ENCODE measurements at regions of chr2 and their contacts with region 1.

Region 1: GRCh38 chr2:239288951-239289511 is 111.8 kb downstream of the HDAC4 start:
- DNase-seq: peak; percentile 69
- ATAC-seq: peak; percentile 73
- H3K4me3 Mint-ChIP-seq: peak overlapping the region; percentile 77
- H3K27ac Mint-ChIP-seq: peak overlapping the region; percentile 93
- H3K4me1 Mint-ChIP-seq: peaks cover 76% of the 10 kb centered on the region
- H3K27me3 Mint-ChIP-seq: no peaks in the 10 kb centered on the region

Region 2: DNA sequence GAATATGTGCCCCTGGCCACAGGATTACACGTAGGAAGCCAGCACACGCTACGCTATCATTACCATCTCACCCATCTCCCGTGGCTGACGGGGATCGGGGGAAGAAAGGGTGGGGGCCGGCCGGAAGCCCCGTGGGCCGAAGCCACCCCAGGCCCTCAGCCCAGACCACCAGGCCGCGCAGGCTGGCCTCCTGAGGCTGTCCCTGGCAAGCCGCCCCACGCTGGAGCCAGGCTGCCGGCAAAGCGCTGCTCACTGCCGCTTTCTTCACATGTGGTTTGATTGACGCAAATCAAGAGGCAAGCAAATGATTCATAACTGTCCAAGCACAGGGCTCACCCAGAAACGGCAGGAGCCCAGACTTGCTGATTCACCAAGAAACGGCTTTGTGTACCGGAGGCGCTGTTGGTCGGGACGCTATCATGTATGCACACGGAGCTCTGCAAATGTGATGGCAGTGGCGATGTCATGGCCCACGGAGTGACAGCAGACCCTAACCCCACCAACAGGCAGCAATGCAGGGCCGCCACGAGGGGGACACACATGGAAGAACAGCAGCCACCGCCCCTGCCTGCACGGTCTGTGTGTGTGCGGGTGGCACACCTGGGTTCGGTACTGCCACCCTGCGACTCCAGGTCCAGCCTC is 13.9 kb before region 1 on chr2:
- CTCF ChIA-PET with region 1: interaction called, 23 read pairs
- POLR2A ChIA-PET with region 1: interaction called, 19 read pairs
- DNase-seq: peak; percentile 83
- ATAC-seq: peak; percentile 95
- H3K4me3 Mint-ChIP-seq: peak overlapping the region; percentile 60
- H3K27ac Mint-ChIP-seq: peak overlapping the region; percentile 89
- H3K4me1 Mint-ChIP-seq: peaks cover 78% of the 10 kb centered on the region
- H3K27me3 Mint-ChIP-seq: no peaks in the 10 kb centered on the region

Region 3: GRCh38 chr2:239303711-239304532 is 14.9 kb after region 1 on chr2:
- CTCF ChIA-PET with region 1: interaction called, 10 read pairs
- POLR2A ChIA-PET with region 1: interaction called, 4 read pairs
- DNase-seq: no peak
- ATAC-seq: peak; percentile 40
- H3K4me3 Mint-ChIP-seq: no peak overlapping the region
- H3K27ac Mint-ChIP-seq: peak overlapping the region; percentile 66
- H3K4me1 Mint-ChIP-seq: peaks cover 38% of the 10 kb centered on the region
- H3K27me3 Mint-ChIP-seq: no peaks in the 10 kb centered on the region

Region 4: GRCh38 chr2:239376351-239376750 is 87.3 kb after region 1 on chr2:
- CTCF ChIA-PET with region 1: no interaction called
- POLR2A ChIA-PET with region 1: no interaction called
- DNase-seq: no peak
- ATAC-seq: no peak
- H3K4me3 Mint-ChIP-seq: no peak overlapping the region
- H3K27ac Mint-ChIP-seq: no peak overlapping the region
- H3K4me1 Mint-ChIP-seq: peaks cover 13% of the 10 kb centered on the region
- H3K27me3 Mint-ChIP-seq: no peaks in the 10 kb centered on the region

Region 5: DNA sequence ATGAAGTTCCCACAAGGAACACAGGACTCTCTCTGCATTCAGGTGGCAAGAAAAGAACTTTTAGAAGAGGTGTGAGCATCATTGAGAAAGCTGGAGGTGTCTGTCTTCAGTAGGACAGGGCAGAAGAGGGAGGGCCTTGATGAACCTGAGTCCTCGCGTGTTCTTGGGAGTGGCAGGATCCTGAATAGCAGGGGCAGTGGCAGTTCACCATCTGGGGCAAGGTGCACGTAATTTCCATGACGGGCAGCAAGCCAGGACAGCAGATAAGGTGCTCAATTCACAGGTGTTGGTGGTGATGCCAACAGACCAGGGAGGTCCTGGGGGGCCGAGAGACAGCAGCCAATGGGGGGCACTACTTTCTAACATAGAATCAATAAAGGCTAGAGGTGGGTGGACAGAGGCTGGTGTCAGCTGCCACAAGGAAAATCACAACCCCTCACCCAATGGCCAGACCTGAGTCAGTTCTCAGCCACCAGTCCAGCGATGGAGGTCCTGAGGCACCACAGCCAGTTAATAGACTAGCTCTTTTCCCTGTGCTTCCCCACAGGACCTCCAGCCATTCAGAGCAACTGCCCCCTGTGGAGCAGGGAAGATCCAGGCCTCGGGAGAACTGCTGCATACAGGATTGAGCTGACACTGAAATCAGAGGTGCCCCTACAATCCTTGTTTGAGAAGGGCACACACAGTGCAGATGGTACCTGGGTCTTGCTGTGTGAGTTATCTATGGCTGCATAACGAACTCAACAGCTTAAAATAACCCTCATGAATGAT is 122.7 kb after region 1 on chr2:
- CTCF ChIA-PET with region 1: no interaction called
- POLR2A ChIA-PET with region 1: no interaction called
- DNase-seq: no peak
- ATAC-seq: no peak
- H3K4me3 Mint-ChIP-seq: no peak overlapping the region
- H3K27ac Mint-ChIP-seq: no peak overlapping the region
- H3K4me1 Mint-ChIP-seq: peaks cover 14% of the 10 kb centered on the region
- H3K27me3 Mint-ChIP-seq: peaks cover 17% of the 10 kb centered on the region

Measured in activated CD8-positive, alpha-beta T cell treated with anti-CD3 and anti-CD28 coated beads, Interleukin-2, amount 10 ng/mL, durations not matched to agents 7 days and 5 days (primary cell).